ENCODE measurements at regions of chr5 and their contacts with region 1.

Region 1: GRCh38 chr5:68331192-68332079 is 115.9 kb downstream of the PIK3R1 start:
- DNase-seq: no peak
- H3K4me3 ChIP-seq: no peak overlapping the region
- H3K27ac ChIP-seq: no peak overlapping the region
- H3K4me1 ChIP-seq: peaks cover 0 to 6% of the 10 kb centered on the region in 2 donors
- H3K27me3 ChIP-seq: no peaks in the 10 kb centered on the region
- CTCF ChIP-seq: no peak
- POLR2A ChIP-seq: no peak

Region 2: GRCh38 chr5:68348447-68349222 is 17.2 kb after region 1 on chr5:
- intact Hi-C with region 1: loop called (anchors 1 kb)
- DNase-seq: no peak
- H3K4me3 ChIP-seq: no peak overlapping the region
- H3K27ac ChIP-seq: no peak overlapping the region
- H3K4me1 ChIP-seq: peaks cover 0 to 5% of the 10 kb centered on the region in 2 donors
- H3K27me3 ChIP-seq: no peaks in the 10 kb centered on the region
- CTCF ChIP-seq: no peak
- POLR2A ChIP-seq: no peak